Heart right ventricle (tissue), 16 donors: ENCODE measurements at regions of chr1 and their contacts with region 1.

Region 1: GRCh38 chr1:147494998-147495580 is 46.2 kb upstream of the BCL9 start:
- DNase-seq: peak; percentile 51 to 79
- ATAC-seq: peak; percentile 84 to 96 (median 92)
- H3K4me3 ChIP-seq: no peak overlapping the region
- H3K27ac ChIP-seq: no peak overlapping the region
- H3K4me1 ChIP-seq: peaks cover 0 to 31% (median 19%) of the 10 kb centered on the region in 9 donors
- H3K27me3 ChIP-seq: no peaks in the 10 kb centered on the region
- CTCF ChIP-seq: peak; percentile 80 to 97 (median 93)

Region 2: DNA sequence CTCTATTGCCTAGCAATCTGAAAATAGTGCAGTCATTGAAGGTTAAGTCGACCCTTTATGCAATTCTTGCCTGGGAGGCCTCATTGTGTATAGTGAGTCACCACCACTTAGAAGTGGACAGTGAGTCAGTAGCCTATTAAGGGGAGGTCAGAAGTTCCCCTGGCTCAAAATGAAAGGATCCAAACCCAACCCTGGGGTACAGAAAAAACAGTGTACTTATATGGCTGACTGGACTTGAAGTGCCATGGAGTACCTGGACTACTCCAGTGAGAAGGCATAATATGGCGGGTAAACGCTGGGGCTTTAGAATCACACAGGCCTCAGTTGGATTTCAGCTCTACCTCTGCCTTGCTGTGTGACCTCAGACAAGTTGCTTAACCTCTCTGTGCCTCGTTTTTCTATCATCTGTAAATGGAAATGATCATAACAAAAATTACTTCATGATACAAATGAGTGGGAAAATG is 44.1 kb after region 1 on chr1:
- intact Hi-C with region 1: loop called in 3 of 10 experiments (anchors 5 kb)
- DNase-seq: peak in 1 of 2 donors; percentile 36
- ATAC-seq: peak in 6 of 8 donors; percentile 35 to 79 (median 56)
- H3K4me3 ChIP-seq: no peak overlapping the region
- H3K27ac ChIP-seq: peak overlapping the region; percentile 72 to 92 (median 85)
- H3K4me1 ChIP-seq: peaks cover 2 to 66% (median 39%) of the 10 kb centered on the region in 9 donors
- H3K27me3 ChIP-seq: peaks cover 0 to 18% (median 0%) of the 10 kb centered on the region in 7 donors
- CTCF ChIP-seq: no peak

Region 3: DNA sequence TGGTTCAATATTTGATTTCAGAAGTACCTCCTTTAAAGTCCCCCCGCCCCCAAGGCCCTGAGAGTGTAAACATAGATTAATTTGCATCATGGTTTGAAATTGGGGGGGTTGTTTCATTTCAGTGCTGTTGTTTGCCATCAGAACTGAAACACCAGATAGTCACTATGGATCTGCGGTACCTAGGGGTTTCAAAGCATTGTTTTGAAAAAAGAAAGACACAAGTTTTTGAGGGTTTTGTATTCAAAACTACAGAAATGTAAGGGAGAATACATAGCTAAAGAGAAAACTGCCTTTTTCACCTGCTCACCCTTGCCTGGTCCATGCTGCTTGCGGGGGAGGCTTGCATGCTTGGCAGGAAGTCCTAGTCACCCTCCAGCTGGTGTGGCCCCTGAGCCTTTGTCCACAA is 115.9 kb after region 1 on chr1:
- intact Hi-C with region 1: loop called in 1 of 10 experiments (anchors 5 kb)
- DNase-seq: no peak
- ATAC-seq: no peak
- H3K4me3 ChIP-seq: no peak overlapping the region
- H3K27ac ChIP-seq: no peak overlapping the region
- H3K4me1 ChIP-seq: peaks cover 0 to 37% (median 12%) of the 10 kb centered on the region in 9 donors
- H3K27me3 ChIP-seq: no peaks in the 10 kb centered on the region
- CTCF ChIP-seq: no peak

Region 4: GRCh38 chr1:147640553-147641165 is 145.6 kb after region 1 on chr1:
- intact Hi-C with region 1: loop called in 8 of 10 experiments (anchors 5 kb)
- DNase-seq: peak; percentile 59 to 69
- ATAC-seq: peak; percentile 85 to 96 (median 94)
- H3K4me3 ChIP-seq: no peak overlapping the region
- H3K27ac ChIP-seq: no peak overlapping the region
- H3K4me1 ChIP-seq: peaks cover 0 to 24% (median 11%) of the 10 kb centered on the region in 9 donors
- H3K27me3 ChIP-seq: no peaks in the 10 kb centered on the region
- CTCF ChIP-seq: peak; percentile 47 to 90 (median 76)

Region 5: DNA sequence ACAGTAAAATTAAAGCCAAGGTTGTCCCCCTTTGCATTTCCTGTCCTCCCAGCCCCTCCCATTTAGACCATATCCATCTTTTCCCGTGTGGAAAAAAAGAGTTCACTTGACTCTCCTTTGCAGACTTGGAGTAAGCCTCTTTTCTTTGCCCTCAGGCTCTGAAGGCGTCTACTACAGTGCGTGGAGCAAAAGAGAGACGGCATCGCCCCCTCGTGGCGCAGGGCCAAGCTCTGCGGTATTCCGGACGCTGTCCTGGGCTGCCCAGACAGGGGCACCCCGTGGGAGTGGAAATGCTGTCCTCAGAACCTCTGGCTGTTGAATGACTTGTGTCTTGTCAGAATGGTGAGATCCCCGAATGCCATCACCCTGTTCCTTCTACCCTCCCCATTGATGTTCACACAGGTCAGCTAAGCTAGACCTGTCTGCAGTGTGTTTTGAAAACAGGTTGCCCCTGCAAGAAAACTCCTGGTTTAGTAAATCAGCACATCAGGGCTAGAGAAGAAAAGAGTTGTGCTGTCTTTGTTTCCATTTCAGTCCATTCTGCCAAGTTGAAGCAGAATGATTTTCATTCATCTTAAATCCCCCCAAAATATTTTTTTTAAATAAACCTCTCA is 395.2 kb after region 1 on chr1:
- intact Hi-C with region 1: loop called in 9 of 10 experiments (anchors 2 to 10 kb)
- DNase-seq: peak; percentile 69 to 84
- ATAC-seq: peak; percentile 86 to 96 (median 94)
- H3K4me3 ChIP-seq: no peak overlapping the region
- H3K27ac ChIP-seq: peak overlapping the region in 1 of 10 donors; percentile 6
- H3K4me1 ChIP-seq: peaks cover 0 to 31% (median 9%) of the 10 kb centered on the region in 9 donors
- H3K27me3 ChIP-seq: peaks cover 0 to 7% (median 0%) of the 10 kb centered on the region in 7 donors
- CTCF ChIP-seq: peak; percentile 50 to 82 (median 72)

Region 6: DNA sequence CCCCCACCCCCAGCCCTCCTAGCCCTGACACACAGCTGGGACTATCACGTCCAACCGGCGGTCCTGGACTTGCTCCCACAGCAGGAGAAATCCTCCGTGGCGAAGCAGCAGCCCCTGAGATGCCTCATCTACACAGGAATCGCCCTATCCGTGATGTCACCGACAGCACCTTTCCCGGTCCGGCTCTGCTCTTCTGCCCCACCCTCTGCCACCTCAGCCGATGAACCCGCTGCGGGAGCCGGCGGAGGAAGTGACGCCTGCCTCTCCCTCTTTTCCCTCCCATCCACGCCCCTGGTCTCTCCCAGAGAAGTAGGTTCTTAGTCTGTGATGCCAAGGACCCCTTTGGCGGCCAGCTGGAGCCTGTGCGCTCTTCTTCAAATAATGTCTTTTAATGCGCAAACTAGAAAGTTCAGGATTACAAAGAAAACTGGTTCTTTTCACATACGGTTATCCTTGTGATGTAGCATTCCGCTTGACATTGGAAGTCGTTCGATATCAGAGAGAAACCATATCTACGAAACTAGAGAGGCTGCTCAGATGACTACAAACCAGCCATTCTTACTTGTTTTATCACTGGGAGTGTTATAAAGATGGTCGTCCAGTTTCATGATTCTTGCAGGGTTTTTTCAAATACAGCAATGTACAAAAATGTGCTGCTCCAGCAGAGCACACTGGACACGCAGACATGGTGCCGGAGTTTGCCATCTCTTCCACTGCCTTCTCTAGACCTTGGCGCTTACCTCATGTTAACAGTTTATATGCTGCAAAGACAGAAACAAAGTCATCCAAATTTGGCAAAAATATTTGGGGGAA is 867.7 kb after region 1 on chr1:
- intact Hi-C with region 1: no loop called
- DNase-seq: no peak
- ATAC-seq: no peak
- H3K4me3 ChIP-seq: peak overlapping the region in 1 of 10 donors; percentile 14
- H3K27ac ChIP-seq: no peak overlapping the region
- H3K4me1 ChIP-seq: peaks cover 2 to 12% (median 11%) of the 10 kb centered on the region in 9 donors
- H3K27me3 ChIP-seq: peaks cover 0 to 76% (median 66%) of the 10 kb centered on the region in 7 donors
- CTCF ChIP-seq: no peak